GM13977 (cell line): ENCODE measurements at regions of chr15 and their contacts with region 1.

Region 1: DNA sequence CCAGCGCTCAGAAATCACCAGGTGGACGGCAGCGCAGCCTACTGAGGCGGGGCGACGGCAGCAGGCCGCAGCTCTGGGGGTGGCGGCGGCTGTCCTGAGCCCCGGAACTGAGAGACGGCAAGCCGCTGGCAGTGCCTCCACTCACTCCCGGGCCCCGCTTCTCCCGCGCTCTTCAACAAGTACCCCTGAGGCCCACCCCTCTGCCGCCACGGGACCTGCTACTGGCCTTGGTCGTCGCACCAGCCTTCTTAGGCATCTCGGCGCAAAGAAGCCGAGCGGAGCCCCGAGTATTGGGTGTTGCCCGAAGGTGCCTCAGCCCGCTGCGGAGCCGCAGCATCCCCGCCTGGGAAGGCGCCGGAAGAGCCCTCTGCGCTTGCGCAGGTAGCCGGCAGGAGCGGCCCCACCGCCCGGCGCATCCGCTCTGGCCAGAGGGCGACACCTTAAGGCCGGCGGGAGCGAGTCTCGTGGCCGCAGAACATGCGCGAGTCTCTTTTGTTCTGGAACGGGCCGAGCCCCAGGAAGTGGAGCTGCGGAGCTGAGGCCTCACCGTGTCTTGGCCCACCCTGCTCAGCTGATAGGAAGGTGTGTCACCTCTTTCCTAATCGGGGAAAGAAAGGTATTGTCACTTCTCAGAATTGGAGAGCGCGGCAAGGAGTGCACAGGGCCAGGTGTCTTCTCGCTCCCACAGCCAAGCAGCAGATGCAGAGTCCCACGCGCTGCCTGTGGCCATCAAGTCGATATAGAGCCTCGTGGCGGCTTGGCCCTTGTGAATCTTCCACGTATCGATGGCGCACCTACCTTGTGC is at the start of gene C15orf40:
- DNase-seq: peak; percentile 93
- CTCF ChIP-seq: peak; percentile 94

Region 2: GRCh38 chr15:83170474-83171165 is 159.1 kb after region 1 on chr15:
- in situ Hi-C with region 1: no loop called
- DNase-seq: no peak
- CTCF ChIP-seq: no peak

Region 3: DNA sequence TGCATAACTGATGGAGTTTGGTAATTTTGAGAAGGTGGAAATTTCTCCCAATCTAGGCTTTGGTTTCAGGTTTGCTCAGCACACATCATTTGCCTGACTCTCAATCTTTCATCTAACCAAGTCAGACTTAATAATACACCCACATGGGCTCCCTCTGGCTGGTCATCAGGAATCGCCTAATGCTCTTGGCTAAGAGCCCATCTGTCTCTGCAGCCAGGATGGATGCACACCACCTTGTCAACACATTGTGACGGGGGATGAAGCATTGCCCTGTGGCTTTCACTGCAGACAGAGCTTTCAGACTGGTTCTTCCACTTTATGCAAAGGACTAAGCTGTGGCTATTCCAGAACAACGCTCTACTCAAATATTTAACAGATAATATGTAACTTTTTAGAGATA is 199.1 kb after region 1 on chr15:
- in situ Hi-C with region 1: loop called (anchors 10 kb)
- DNase-seq: peak; percentile 27
- CTCF ChIP-seq: no peak

Region 4: GRCh38 chr15:83380682-83381081 is 369.2 kb after region 1 on chr15:
- in situ Hi-C with region 1: loop called (anchors 25 kb)
- DNase-seq: peak; percentile 85
- CTCF ChIP-seq: peak; percentile 78